Activated CD4-positive, alpha-beta T cell treated with anti-CD3 and anti-CD28 coated beads, Interleukin-2, amount 10 ng/mL, durations not matched to agents 24 days and 14 days (primary cell): ENCODE measurements at regions of chr7 and their contacts with region 1.

Region 1: DNA sequence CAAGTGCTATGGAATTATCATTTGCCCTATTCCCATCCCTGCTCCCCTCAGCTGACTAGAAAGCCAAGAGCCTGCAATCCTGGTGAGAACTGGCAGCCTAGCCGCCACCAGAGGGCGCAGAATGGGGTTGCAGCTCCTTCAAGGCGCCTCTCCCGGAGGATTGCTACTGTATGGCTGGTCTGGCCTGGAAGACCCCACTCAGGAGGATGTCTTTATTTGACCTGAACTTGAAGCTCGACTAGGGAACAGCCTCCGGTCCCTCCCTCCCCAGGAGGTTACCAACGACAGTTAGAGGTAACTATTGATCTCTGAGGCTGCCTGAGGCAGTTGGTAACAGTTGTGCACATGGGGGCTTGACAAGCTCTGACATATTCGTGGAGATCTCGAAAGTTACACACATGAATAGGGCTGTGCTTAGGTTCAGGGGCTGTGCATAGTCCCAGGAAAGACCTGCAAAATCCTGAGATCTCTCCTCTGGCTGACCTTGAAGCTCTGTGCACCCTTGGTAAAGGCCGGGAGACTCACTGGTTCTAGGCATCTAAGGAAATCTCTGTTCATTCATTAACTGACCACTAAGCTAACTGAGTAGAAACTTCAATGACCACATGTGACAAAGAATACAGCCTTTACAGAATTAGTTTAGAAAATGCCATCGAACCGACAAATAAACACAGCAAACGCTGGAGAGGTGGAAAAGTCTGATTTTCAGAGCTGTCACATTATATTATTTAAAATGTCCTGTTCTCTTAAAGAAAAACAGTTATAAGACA is 65.7 kb downstream of the TSPAN12 start:
- DNase-seq: peak; percentile 85
- H3K4me3 Mint-ChIP-seq: no peak overlapping the region
- H3K27ac Mint-ChIP-seq: no peak overlapping the region
- H3K4me1 Mint-ChIP-seq: no peaks in the 10 kb centered on the region
- H3K27me3 Mint-ChIP-seq: peaks cover 6% of the 10 kb centered on the region

Region 2: DNA sequence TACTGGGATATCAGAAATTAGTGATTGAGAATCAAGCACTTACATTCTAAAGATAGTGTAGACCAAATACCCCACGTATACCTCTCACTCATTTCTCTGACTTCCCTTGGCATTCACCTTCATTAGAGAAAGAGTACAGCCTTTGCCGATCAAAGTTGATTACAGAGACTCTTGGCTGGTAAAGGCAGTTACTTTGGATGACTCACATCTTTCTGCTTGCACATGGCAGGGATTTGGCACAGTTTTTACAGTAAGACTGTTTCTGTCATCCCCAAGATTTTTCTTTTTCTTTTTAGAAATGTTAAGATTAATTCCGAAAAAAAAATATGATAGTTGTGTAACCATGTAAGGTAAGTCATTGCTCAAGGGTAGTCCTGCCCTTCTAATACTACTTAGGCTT is 77.3 kb before region 1 on chr7:
- intact Hi-C with region 1: no loop called
- DNase-seq: no peak
- H3K4me3 Mint-ChIP-seq: no peak overlapping the region
- H3K27ac Mint-ChIP-seq: no peak overlapping the region
- H3K4me1 Mint-ChIP-seq: no peaks in the 10 kb centered on the region
- H3K27me3 Mint-ChIP-seq: peaks cover 1% of the 10 kb centered on the region

Region 3: DNA sequence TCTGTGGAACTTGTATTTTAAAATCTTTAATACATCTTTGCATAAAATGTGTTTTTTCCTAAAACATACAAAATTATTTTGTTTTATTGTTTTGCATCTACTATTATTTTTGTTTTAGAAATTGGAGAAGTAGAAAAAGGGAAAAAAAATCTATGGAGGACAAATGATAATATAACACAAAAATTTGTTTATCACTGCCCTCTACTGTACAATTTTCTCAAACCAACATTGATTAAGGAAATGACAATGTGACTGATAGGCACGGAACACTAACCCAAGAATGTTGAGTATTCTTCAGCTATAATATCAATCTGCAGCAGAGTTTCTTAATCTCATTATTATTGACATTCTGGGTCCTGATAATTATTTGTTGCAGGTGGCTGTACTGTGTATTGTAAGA is 148.8 kb after region 1 on chr7:
- intact Hi-C with region 1: loop called (anchors 2 kb)
- DNase-seq: no peak
- H3K4me3 Mint-ChIP-seq: no peak overlapping the region
- H3K27ac Mint-ChIP-seq: no peak overlapping the region
- H3K4me1 Mint-ChIP-seq: no peaks in the 10 kb centered on the region
- H3K27me3 Mint-ChIP-seq: peaks cover 23% of the 10 kb centered on the region

Region 4: DNA sequence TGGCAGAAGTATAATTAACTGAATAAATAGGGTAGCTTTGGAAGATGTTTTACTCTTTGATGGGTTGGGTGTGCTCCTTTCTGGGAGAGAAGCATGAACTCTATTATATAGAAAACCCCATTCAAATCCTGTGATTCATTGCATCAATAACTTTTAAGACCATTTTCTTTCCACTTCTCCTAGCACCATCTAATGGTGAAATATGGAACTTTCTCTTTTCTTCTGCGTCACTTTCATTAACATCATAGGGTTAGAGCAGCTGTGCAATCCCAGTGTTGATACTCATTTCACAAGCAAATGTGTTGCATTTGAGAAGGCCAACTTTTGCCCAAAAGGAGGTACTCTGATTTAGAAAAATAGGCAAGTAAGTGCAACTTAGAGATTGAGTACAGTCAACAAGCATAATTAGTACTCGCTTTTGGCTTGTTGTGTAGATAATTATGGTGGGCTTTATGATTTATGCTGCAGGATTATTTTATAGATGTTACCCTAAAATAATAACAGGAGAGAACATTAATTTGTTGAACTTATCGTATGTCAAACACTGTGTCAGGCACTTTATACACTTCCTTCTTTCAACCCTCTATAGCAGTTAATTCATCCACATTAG is 289.2 kb after region 1 on chr7:
- intact Hi-C with region 1: loop called (anchors 5 kb)
- DNase-seq: peak; percentile 63
- H3K4me3 Mint-ChIP-seq: no peak overlapping the region
- H3K27ac Mint-ChIP-seq: no peak overlapping the region
- H3K4me1 Mint-ChIP-seq: no peaks in the 10 kb centered on the region
- H3K27me3 Mint-ChIP-seq: peaks cover 22% of the 10 kb centered on the region